ENCODE measurements at regions of chr9 and their contacts with region 1.

Region 1: GRCh38 chr9:2053883-2054845 is 39.0 kb downstream of the SMARCA2 start:
- DNase-seq: peak; percentile 95
- ATAC-seq: peak; percentile 95
- H3K4me3 ChIP-seq: peak overlapping the region; percentile 31; the same call in 1 of the 2 replicates
- H3K27ac ChIP-seq: peak overlapping the region; percentile 78
- H3K4me1 ChIP-seq: peaks cover 33% of the 10 kb centered on the region
- H3K27me3 ChIP-seq: no peaks in the 10 kb centered on the region
- CTCF ChIP-seq: no peak
- EP300 ChIP-seq: peak; percentile 87 to 88
- POLR2A ChIP-seq: 0 out of 2 replicates have a peak, but pooled peaks have one; percentile 28
- RAD21 ChIP-seq: 0 out of 2 replicates have a peak, but pooled peaks have one; percentile 6

Region 2: DNA sequence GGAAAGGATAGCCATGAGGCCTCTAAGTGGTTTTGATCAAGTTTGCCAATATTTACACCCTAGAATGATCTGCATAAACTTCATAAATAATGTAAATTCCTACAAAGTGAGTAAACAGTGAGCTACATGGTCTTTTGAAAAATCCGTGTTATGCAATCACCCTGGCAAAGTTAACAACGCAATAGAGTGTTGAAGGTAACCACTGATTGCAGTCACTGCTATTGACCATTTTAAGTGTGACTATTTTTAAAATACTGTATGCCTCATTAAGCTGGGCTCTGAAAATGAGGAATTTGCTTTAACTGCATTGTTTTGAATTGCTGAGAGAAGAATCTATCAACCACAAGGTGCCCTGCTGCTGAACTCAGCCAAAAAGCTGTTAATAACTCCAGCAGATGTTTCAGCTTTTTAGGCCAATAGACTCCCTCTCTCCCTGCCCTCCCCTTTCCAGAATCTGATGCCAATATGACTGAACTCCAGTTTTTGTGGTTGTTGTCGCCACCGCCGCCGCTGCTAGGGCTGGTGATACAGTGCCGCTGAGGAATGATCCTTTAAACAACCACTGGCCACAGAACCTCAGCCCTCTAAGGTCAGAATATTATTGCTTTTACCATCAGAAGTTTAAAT is 74.3 kb before region 1 on chr9:
- CTCF ChIA-PET with region 1: interaction called, 4 read pairs
- POLR2A ChIA-PET with region 1: interaction called, 4 read pairs
- RAD21 ChIA-PET with region 1: interaction called, 3 read pairs
- SMC1A ChIA-PET with region 1: interaction called, 10 read pairs
- in situ Hi-C with region 1: no loop called
- intact Hi-C with region 1: no loop called
- DNase-seq: peak; percentile 35
- ATAC-seq: peak; percentile 35
- H3K4me3 ChIP-seq: no peak overlapping the region
- H3K27ac ChIP-seq: no peak overlapping the region
- H3K4me1 ChIP-seq: 0 out of 2 replicates have a peak, but pooled peaks cover 4% of the 10 kb centered on the region
- H3K27me3 ChIP-seq: no peaks in the 10 kb centered on the region
- CTCF ChIP-seq: no peak
- EP300 ChIP-seq: peak in 1 of 2 experiments; percentile 50; a peak in 1 of 4 replicates
- POLR2A ChIP-seq: no peak
- RAD21 ChIP-seq: no peak

Region 3: DNA sequence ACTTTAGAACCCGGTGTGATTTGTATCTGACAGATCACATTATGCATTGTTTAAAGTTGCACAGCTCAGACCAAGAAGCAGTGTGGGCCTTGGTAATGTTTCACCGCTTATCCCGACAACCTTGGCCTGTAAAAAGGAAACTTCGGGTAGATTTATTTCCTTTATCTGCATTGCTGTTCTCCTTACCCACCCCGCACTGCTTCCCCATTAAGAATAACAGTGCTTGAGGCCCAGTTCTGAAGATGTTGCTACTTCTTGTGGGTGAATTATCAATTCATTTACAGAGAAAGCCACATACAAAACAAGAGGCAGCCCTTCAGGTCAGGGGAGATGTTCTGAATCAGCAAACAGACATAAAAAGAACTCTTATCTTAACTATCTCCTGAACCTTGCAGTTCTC is 30.6 kb before region 1 on chr9:
- CTCF ChIA-PET with region 1: interaction called, 12 read pairs
- POLR2A ChIA-PET with region 1: interaction called, 9 read pairs
- RAD21 ChIA-PET with region 1: interaction called, 7 read pairs
- SMC1A ChIA-PET with region 1: interaction called, 29 read pairs
- in situ Hi-C with region 1: no loop called
- intact Hi-C with region 1: loop called (anchors 2 kb)
- DNase-seq: no peak
- ATAC-seq: peak; percentile 30
- H3K4me3 ChIP-seq: peak overlapping the region; percentile 39
- H3K27ac ChIP-seq: peak overlapping the region; percentile 56
- H3K4me1 ChIP-seq: peaks cover 50% of the 10 kb centered on the region
- H3K27me3 ChIP-seq: no peaks in the 10 kb centered on the region
- CTCF ChIP-seq: no peak
- EP300 ChIP-seq: no peak
- POLR2A ChIP-seq: no peak
- RAD21 ChIP-seq: no peak

Region 4: DNA sequence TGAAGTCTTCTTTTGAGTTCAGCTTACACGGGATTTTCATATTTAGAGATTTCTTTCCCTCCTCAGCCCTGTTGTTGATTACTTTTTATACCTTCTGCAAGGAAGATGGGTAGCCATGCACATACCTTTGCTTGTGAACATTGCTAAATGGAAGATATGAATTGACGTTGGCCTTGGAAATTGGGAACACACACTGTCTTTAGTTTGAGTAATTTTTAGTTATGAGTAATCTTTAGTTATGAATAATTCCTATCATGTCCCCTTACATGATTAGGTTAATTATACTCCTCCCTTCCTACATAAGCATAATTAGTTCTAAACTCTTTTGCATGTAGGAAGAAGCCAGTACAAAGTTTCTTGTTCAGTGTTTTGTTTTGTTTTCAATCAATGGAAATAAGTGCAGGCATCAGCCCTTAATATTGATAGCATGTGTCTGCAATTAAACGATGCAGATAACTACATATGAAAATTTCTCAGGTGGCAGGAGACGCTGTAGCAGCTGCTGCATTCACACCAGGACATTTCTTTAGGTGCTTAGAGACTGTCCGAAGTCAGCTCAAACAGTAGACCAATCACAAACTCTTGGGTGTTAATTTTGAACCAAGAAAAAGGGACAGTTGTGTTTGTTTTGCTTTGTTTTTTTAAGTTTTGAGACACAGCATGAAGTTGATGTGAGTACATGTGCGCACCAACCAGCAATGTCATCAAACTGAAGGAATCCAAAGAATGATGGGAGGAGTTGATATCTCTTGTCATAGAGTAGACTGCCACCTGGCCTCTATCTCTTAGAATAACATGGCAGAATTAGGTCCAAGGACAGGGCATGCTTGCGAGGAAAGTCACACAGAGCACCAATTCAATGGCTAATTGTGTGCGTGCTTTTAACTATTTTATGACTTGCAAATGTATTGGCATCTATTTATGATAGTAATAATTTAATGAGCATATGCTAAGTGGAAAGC is 12.4 kb after region 1 on chr9:
- CTCF ChIA-PET with region 1: interaction called, 7 read pairs
- POLR2A ChIA-PET with region 1: interaction called, 5 read pairs
- RAD21 ChIA-PET with region 1: interaction called, 6 read pairs
- SMC1A ChIA-PET with region 1: interaction called, 17 read pairs
- in situ Hi-C with region 1: no loop called
- intact Hi-C with region 1: no loop called
- DNase-seq: no peak
- ATAC-seq: peak; percentile 63
- H3K4me3 ChIP-seq: no peak overlapping the region
- H3K27ac ChIP-seq: no peak overlapping the region
- H3K4me1 ChIP-seq: no peaks in the 10 kb centered on the region
- H3K27me3 ChIP-seq: no peaks in the 10 kb centered on the region
- CTCF ChIP-seq: peak in 2 of 3 experiments; percentile 19 to 40; a peak in 2 of 6 replicates
- EP300 ChIP-seq: no peak
- POLR2A ChIP-seq: no peak
- RAD21 ChIP-seq: 0 out of 2 replicates have a peak, but pooled peaks have one; percentile 16

Region 5: GRCh38 chr9:2140600-2141223 is 86.5 kb after region 1 on chr9:
- CTCF ChIA-PET with region 1: no interaction called
- POLR2A ChIA-PET with region 1: no interaction called
- RAD21 ChIA-PET with region 1: no interaction called
- SMC1A ChIA-PET with region 1: no interaction called
- in situ Hi-C with region 1: no loop called
- intact Hi-C with region 1: no loop called
- DNase-seq: no peak
- ATAC-seq: no peak
- H3K4me3 ChIP-seq: no peak overlapping the region
- H3K27ac ChIP-seq: no peak overlapping the region
- H3K4me1 ChIP-seq: no peaks in the 10 kb centered on the region
- H3K27me3 ChIP-seq: no peaks in the 10 kb centered on the region
- CTCF ChIP-seq: no peak
- EP300 ChIP-seq: no peak
- POLR2A ChIP-seq: no peak
- RAD21 ChIP-seq: no peak

Measured in GM12878 (cell line).